BJ (cell line): ENCODE measurements at regions of chr17 and their contacts with region 1.

Region 1: GRCh38 chr17:62791751-62792445 is 16.2 kb downstream of the MARCHF10 start:
- DNase-seq: peak; percentile 75
- H3K4me3 ChIP-seq: no peak overlapping the region
- H3K27me3 ChIP-seq: no peaks in the 10 kb centered on the region
- CTCF ChIP-seq: no peak

Region 2: GRCh38 chr17:62705778-62706616 is 85.9 kb before region 1 on chr17:
- CTCF ChIA-PET with region 1: no interaction called
- POLR2A ChIA-PET with region 1: no interaction called
- DNase-seq: no peak
- H3K4me3 ChIP-seq: peak overlapping the region; percentile 12; the same call in 1 of the 2 replicates
- H3K27me3 ChIP-seq: no peaks in the 10 kb centered on the region
- CTCF ChIP-seq: no peak

Region 3: GRCh38 chr17:62739645-62740388 is 52.1 kb before region 1 on chr17:
- CTCF ChIA-PET with region 1: no interaction called
- POLR2A ChIA-PET with region 1: interaction called, 12 read pairs
- DNase-seq: peak; percentile 41
- H3K4me3 ChIP-seq: no peak overlapping the region
- H3K27me3 ChIP-seq: no peaks in the 10 kb centered on the region
- CTCF ChIP-seq: 0 out of 2 replicates have a peak, but pooled peaks have one; percentile 2